ENCODE measurements at regions of chr19 and their contacts with region 1.

Region 1: DNA sequence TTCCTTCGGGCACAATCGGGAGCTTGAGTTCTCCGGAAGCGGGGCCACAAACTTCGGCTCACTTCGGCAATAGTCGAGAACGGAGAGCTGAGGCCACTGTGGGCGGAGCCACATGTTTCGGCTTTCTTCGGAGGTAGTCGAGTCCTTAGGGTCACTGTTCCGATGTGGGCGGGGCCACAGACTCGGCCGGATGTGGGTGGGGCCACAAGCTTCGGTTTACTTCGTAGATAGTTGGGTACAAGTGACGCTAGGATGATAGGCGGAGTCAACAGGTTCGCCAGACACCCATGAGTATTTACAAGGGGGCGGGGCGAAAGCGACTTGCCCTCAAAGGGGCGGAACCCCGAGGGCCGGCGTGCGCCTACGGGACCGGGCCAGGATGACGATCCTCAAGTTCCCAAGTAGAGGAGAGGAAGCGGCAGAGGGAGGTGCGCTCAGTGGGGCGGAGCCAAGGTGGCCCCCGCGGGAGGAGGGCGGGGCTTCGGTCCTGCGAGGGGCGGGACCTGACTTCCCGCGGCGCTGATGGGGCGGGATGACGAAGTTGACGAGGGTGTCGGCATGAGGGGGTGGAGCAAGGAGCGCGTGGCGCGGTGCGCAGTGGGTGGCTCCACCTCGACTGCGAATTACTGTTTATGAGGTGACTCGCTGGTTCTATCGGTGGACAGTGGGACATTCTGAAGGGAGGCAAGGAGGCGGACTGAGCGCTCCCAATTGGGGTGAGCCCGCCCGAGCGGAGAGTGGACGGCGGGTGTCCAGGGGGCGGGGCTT is 539 bp upstream of the MBOAT7 start:
- DNase-seq: peak; percentile 99 to 100 (median 100)
- ATAC-seq: peak; percentile 58 to 64 (median 61)
- H3K4me3 ChIP-seq: peak overlapping the region; percentile 67 to 84
- H3K4me3 Mint-ChIP-seq: peak overlapping the region; percentile 87 to 92 (median 92)
- H3K27ac ChIP-seq: peak overlapping the region; percentile 100
- H3K27ac Mint-ChIP-seq: peak overlapping the region; percentile 99 to 100
- H3K4me1 ChIP-seq: peaks cover 17 to 27% of the 10 kb centered on the region in 2 experiments
- H3K4me1 Mint-ChIP-seq: peaks cover 42 to 52% (median 43%) of the 10 kb centered on the region in 3 donors
- H3K27me3 ChIP-seq: no peaks in the 10 kb centered on the region
- H3K27me3 Mint-ChIP-seq: no peaks in the 10 kb centered on the region

Region 2: GRCh38 chr19:53485046-53486004 is 704.6 kb before region 1 on chr19:
- CTCF ChIA-PET with region 1: no interaction called
- POLR2A ChIA-PET with region 1: no interaction called
- DNase-seq: no peak
- ATAC-seq: no peak
- H3K4me3 ChIP-seq: peak overlapping the region in 1 of 2 donors; percentile 10
- H3K4me3 Mint-ChIP-seq: no peak overlapping the region
- H3K27ac ChIP-seq: no peak overlapping the region
- H3K27ac Mint-ChIP-seq: no peak overlapping the region
- H3K4me1 ChIP-seq: no peaks in the 10 kb centered on the region
- H3K4me1 Mint-ChIP-seq: no peaks in the 10 kb centered on the region
- H3K27me3 ChIP-seq: no peaks in the 10 kb centered on the region
- H3K27me3 Mint-ChIP-seq: no peaks in the 10 kb centered on the region

Region 3: GRCh38 chr19:54104998-54105715 is 84.8 kb before region 1 on chr19:
- CTCF ChIA-PET with region 1: no interaction called
- POLR2A ChIA-PET with region 1: interaction called in 1 of 2 experiments, 11 read pairs
- DNase-seq: no peak
- ATAC-seq: no peak
- H3K4me3 ChIP-seq: no peak overlapping the region
- H3K4me3 Mint-ChIP-seq: peak overlapping the region in 2 of 3 donors; percentile 17 to 99
- H3K27ac ChIP-seq: no peak overlapping the region
- H3K27ac Mint-ChIP-seq: no peak overlapping the region
- H3K4me1 ChIP-seq: peaks cover 4 to 23% of the 10 kb centered on the region in 2 experiments
- H3K4me1 Mint-ChIP-seq: peaks cover 23 to 35% (median 34%) of the 10 kb centered on the region in 3 donors
- H3K27me3 ChIP-seq: no peaks in the 10 kb centered on the region
- H3K27me3 Mint-ChIP-seq: no peaks in the 10 kb centered on the region

Region 4: GRCh38 chr19:54137086-54137921 is 52.6 kb before region 1 on chr19 and contains the start of gene CNOT3:
- CTCF ChIA-PET with region 1: interaction called in 1 of 2 experiments, 26 read pairs
- POLR2A ChIA-PET with region 1: interaction called in 1 of 2 experiments, 30 read pairs
- DNase-seq: peak; percentile 95 to 100 (median 99)
- ATAC-seq: peak; percentile 80 to 84 (median 81)
- H3K4me3 ChIP-seq: peak within 1 kb of the TSS; percentile 67 to 73
- H3K4me3 Mint-ChIP-seq: peak within 1 kb of the TSS; percentile 78 to 88 (median 87)
- H3K27ac ChIP-seq: peak within 1 kb of the TSS; percentile 70
- H3K27ac Mint-ChIP-seq: peak within 1 kb of the TSS; percentile 90 to 92
- H3K4me1 ChIP-seq: peaks cover 13 to 51% of the 10 kb centered on the region in 2 experiments
- H3K4me1 Mint-ChIP-seq: peaks cover 49 to 55% (median 52%) of the 10 kb centered on the region in 3 donors
- H3K27me3 ChIP-seq: peaks cover 0 to 5% of the 10 kb centered on the region in 2 experiments
- H3K27me3 Mint-ChIP-seq: no peaks in the 10 kb centered on the region
- total RNA-seq, gene CNOT3: 45.9 to 83.1 (median 77.0) TPM

Region 5: GRCh38 chr19:54159352-54160181 is 30.4 kb before region 1 on chr19 and contains the start of gene LENG1:
- CTCF ChIA-PET with region 1: interaction called, 4 to 10 read pairs
- POLR2A ChIA-PET with region 1: interaction called in 1 of 2 experiments, 6 read pairs
- DNase-seq: peak; percentile 92 to 100 (median 99)
- ATAC-seq: peak; percentile 87 to 89 (median 88)
- H3K4me3 ChIP-seq: peak within 1 kb of the TSS; percentile 84
- H3K4me3 Mint-ChIP-seq: peak within 1 kb of the TSS; percentile 94 to 100 (median 100)
- H3K27ac ChIP-seq: peak within 1 kb of the TSS; percentile 80
- H3K27ac Mint-ChIP-seq: peak within 1 kb of the TSS; percentile 100
- H3K4me1 ChIP-seq: peaks cover 31 to 86% of the 10 kb centered on the region in 2 experiments
- H3K4me1 Mint-ChIP-seq: peaks cover 62 to 78% (median 68%) of the 10 kb centered on the region in 3 donors
- H3K27me3 ChIP-seq: peaks cover 0 to 12% of the 10 kb centered on the region in 2 experiments
- H3K27me3 Mint-ChIP-seq: no peaks in the 10 kb centered on the region
- total RNA-seq, gene LENG1: 8.4 to 21.5 (median 19.2) TPM

Region 6: DNA sequence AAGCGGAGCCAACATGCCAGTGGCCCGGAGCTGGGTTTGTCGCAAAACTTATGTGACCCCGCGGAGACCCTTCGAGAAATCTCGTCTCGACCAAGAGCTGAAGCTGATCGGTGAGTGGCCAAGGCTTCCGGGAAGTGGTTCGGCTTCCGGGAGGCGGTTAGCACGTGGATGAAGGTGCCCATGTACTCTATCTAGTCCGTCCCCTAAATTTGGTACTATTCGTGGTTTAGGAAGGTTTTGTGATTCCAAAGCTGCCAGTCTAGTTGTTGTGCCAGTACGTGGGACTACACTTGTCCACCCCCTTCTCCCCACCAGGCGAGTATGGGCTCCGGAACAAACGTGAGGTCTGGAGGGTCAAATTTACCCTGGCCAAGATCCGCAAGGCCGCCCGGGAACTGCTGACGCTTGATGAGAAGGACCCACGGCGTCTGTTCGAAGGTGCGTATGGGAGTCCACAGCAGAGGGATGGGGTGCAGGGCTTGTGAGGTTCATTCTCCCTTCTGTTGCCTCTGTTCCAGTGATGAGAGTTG is 11.3 kb after region 1 on chr19:
- CTCF ChIA-PET with region 1: interaction called in 1 of 2 experiments, 9 read pairs
- POLR2A ChIA-PET with region 1: interaction called, 4 to 18 read pairs
- DNase-seq: no peak
- ATAC-seq: no peak
- H3K4me3 ChIP-seq: peak overlapping the region; percentile 88 to 95
- H3K4me3 Mint-ChIP-seq: peak overlapping the region; percentile 96 to 100 (median 99)
- H3K27ac ChIP-seq: peak overlapping the region; percentile 94
- H3K27ac Mint-ChIP-seq: peak overlapping the region; percentile 98
- H3K4me1 ChIP-seq: peaks cover 24 to 55% of the 10 kb centered on the region in 2 experiments
- H3K4me1 Mint-ChIP-seq: peaks cover 56 to 61% (median 59%) of the 10 kb centered on the region in 3 donors
- H3K27me3 ChIP-seq: no peaks in the 10 kb centered on the region
- H3K27me3 Mint-ChIP-seq: no peaks in the 10 kb centered on the region

Region 7: GRCh38 chr19:54209811-54210494 is 20.0 kb after region 1 on chr19:
- CTCF ChIA-PET with region 1: interaction called, 7 to 12 read pairs
- POLR2A ChIA-PET with region 1: interaction called in 1 of 2 experiments, 4 read pairs
- DNase-seq: peak in 17 of 35 experiments; percentile 8 to 56 (median 32)
- ATAC-seq: no peak
- H3K4me3 ChIP-seq: no peak overlapping the region
- H3K4me3 Mint-ChIP-seq: peak overlapping the region in 2 of 3 donors; percentile 18 to 40
- H3K27ac ChIP-seq: peak overlapping the region; percentile 64
- H3K27ac Mint-ChIP-seq: peak overlapping the region; percentile 68 to 72
- H3K4me1 ChIP-seq: peaks cover 0 to 64% of the 10 kb centered on the region in 2 experiments
- H3K4me1 Mint-ChIP-seq: peaks cover 61 to 65% (median 62%) of the 10 kb centered on the region in 3 donors
- H3K27me3 ChIP-seq: no peaks in the 10 kb centered on the region
- H3K27me3 Mint-ChIP-seq: no peaks in the 10 kb centered on the region

Region 8: DNA sequence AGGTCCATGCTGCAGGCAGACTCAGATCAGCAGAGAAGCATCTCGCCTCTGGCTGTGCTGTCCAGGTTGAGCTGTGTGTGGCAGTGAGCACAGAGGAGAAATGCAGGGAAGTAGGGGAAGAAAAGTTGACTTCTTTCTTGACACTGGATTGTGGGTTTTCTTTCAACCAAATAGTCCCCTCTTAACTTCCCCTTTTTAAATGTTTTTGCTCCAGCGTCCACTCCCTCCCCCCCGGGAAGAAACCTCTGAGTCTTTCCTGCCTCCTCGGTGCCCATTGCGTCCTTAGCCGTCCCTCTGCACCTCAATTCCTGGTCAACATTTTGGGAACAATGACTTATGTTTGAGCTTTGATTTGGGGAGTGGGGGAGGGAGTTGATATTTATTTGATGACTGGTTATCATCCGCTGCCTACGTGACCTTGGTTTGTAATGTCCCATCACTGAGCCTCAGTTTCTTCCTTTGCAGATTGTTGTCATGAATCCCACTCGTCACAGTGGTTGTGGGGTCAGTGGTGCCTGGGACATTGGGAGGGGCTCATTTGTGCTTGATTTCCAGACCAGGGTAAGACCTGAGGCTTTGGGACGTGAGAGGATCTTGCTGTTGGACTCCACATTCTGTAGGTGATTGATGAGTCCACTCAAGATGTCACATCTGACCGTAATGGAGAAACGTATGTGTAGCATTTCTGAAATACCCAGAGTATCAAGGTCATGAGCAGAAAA is 91.2 kb after region 1 on chr19 and contains the start of gene LILRB2:
- CTCF ChIA-PET with region 1: no interaction called
- POLR2A ChIA-PET with region 1: no interaction called
- DNase-seq: no peak
- ATAC-seq: no peak
- H3K4me3 ChIP-seq: no peak within 1 kb of the TSS
- H3K4me3 Mint-ChIP-seq: no peak within 1 kb of the TSS
- H3K27ac ChIP-seq: no peak within 1 kb of the TSS
- H3K27ac Mint-ChIP-seq: no peak within 1 kb of the TSS
- H3K4me1 ChIP-seq: peaks cover 0 to 3% of the 10 kb centered on the region in 2 experiments
- H3K4me1 Mint-ChIP-seq: peaks cover 0 to 16% (median 7%) of the 10 kb centered on the region in 3 donors
- H3K27me3 ChIP-seq: peaks cover 0 to 57% of the 10 kb centered on the region in 2 experiments
- H3K27me3 Mint-ChIP-seq: peaks cover 29 to 59% of the 10 kb centered on the region in 2 donors
- total RNA-seq, gene LILRB2: 0.46 to 0.53 TPM in 2 of 5 donors, not detected in the others

Measured in T-cell (primary cell).